ENCODE measurements at regions of chr20 and their contacts with region 1.

Region 1: GRCh38 chr20:59032023-59032712 is at the start of gene ATP5F1E:
- DNase-seq: peak; percentile 89
- ATAC-seq: peak; percentile 99
- H3K4me3 ChIP-seq: peak within 1 kb of the TSS; percentile 93
- H3K27ac ChIP-seq: peak within 1 kb of the TSS; percentile 94
- H3K4me1 ChIP-seq: peaks cover 9% of the 10 kb centered on the region
- H3K27me3 ChIP-seq: no peaks in the 10 kb centered on the region
- CTCF ChIP-seq: no peak
- POLR2A ChIP-seq: peak; percentile 79
- RAD21 ChIP-seq: no peak
- total RNA-seq, gene ATP5F1E: 3.8 and 12.2 TPM in 2 replicates

Region 2: DNA sequence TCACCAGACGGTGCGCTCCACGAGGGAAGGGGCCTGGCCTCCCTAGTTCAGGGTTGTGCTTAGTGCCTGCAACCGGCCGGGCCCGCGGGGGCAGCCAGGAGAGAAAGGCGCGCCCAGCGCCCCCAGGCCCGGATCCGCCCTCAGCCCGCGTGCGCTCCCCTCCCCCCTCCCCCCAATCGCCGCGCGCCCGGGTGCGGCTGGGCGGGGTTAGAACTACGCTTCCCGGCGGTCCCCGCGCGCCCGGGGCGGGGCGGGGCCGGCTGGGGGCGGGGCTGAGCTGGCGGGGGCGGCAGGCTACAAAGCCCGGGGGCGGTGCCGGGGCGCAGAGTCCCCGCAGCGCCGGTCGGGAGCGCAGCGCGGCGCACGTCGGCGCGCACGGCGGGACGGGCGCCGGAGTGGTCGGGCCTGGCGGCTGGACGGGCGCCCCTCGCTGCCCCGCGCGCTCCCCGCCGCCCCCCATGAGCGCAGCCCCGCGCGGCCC is 1641.1 kb before region 1 on chr20 and contains the start of gene RBM38:
- CTCF ChIA-PET with region 1: no interaction called
- POLR2A ChIA-PET with region 1: no interaction called
- dilution Hi-C with region 1: no loop called
- in situ Hi-C with region 1: loop called (anchors 25 kb)
- intact Hi-C with region 1: no loop called
- DNase-seq: peak; percentile 49
- ATAC-seq: peak; percentile 96
- H3K4me3 ChIP-seq: peak within 1 kb of the TSS; percentile 99
- H3K27ac ChIP-seq: peak within 1 kb of the TSS; percentile 30; the same call in 1 of the 2 replicates
- H3K4me1 ChIP-seq: peaks cover 9% of the 10 kb centered on the region
- H3K27me3 ChIP-seq: no peaks in the 10 kb centered on the region
- CTCF ChIP-seq: no peak
- POLR2A ChIP-seq: no peak
- RAD21 ChIP-seq: no peak
- total RNA-seq, gene RBM38: 5.2 and 6.9 TPM in 2 replicates

Region 3: DNA sequence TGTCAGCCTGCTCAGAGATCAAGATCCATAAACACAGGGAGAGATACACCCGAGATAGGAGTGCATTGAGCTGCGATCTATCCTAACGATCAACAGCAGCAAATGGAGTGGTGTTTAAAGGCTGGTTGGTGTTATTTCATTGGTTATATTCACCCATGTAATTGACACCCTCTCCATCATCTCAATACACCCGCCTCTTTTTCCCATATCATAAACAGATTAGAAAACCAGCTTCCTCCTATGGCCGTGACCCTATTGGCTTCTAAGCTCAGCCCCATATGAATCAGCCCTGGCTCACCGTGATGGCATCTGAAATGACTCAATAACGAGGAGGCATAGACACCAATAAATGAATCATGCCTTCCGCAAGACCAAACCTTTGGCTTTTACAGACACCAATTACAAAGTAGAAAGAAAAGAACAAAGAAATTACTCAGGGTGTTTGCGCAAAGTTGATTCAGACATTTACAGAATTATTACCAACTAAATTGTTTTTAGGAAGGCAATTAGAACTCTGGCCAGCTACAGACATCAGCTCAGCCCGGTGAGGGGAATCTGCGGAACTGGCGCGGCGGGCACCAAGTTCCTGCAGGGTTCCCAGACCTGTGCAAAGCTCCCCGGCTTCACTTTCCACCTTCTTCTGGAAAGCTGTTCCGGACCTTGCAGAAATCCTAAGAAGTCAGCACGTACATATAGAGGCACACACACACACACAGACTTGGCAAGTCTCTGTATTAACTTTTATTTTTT is 1333.9 kb before region 1 on chr20:
- CTCF ChIA-PET with region 1: no interaction called
- POLR2A ChIA-PET with region 1: no interaction called
- dilution Hi-C with region 1: no loop called
- in situ Hi-C with region 1: loop called (anchors 25 kb)
- intact Hi-C with region 1: no loop called
- DNase-seq: peak; percentile 98
- ATAC-seq: peak; percentile 95
- H3K4me3 ChIP-seq: peak overlapping the region; percentile 5; the same call in 1 of the 2 replicates
- H3K27ac ChIP-seq: peak overlapping the region; percentile 64
- H3K4me1 ChIP-seq: peaks cover 17% of the 10 kb centered on the region
- H3K27me3 ChIP-seq: no peaks in the 10 kb centered on the region
- CTCF ChIP-seq: no peak
- POLR2A ChIP-seq: peak; percentile 14; the same call in 1 of the 2 replicates
- RAD21 ChIP-seq: no peak

Region 4: GRCh38 chr20:58481481-58482021 is 550.6 kb before region 1 on chr20:
- CTCF ChIA-PET with region 1: no interaction called
- POLR2A ChIA-PET with region 1: no interaction called
- dilution Hi-C with region 1: no loop called
- in situ Hi-C with region 1: no loop called
- intact Hi-C with region 1: no loop called
- DNase-seq: no peak
- ATAC-seq: peak; percentile 56
- H3K4me3 ChIP-seq: no peak overlapping the region
- H3K27ac ChIP-seq: no peak overlapping the region
- H3K4me1 ChIP-seq: no peaks in the 10 kb centered on the region
- H3K27me3 ChIP-seq: no peaks in the 10 kb centered on the region
- CTCF ChIP-seq: peak; percentile 55
- POLR2A ChIP-seq: no peak
- RAD21 ChIP-seq: peak; percentile 79

Region 5: DNA sequence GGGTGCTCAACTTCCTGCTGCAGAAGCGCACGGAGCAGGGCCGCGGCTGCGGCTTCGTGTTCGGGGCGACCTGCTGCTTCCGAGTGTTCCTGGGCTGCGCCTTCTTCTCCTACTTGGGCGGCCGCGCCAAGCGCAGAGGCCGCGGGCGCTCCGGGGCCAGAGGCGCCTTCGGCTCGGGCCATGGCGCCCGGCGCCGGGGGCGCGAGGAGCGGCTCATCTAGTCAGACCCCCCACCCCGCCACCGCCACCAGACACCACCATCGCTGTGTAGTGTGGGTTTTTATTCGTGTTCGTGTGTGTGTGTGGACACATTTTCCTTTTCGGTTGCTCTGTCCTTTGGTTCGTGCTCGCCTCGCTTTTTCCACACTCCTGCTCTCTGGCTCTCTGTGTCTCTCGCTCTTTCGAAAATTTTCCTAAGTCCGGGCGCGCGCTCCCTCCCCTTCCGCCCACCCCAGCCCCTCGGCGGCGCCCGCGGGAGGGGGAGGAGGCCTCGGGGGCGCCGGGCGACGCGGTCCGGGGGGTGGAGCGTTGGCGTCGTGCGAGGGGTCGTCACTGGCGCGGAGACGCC is 141.6 kb before region 1 on chr20:
- CTCF ChIA-PET with region 1: no interaction called
- POLR2A ChIA-PET with region 1: no interaction called
- dilution Hi-C with region 1: no loop called
- in situ Hi-C with region 1: no loop called
- intact Hi-C with region 1: loop called (anchors 5 kb)
- DNase-seq: peak; percentile 77
- ATAC-seq: peak; percentile 64
- H3K4me3 ChIP-seq: peak overlapping the region; percentile 100
- H3K27ac ChIP-seq: peak overlapping the region; percentile 91
- H3K4me1 ChIP-seq: peaks cover 3% of the 10 kb centered on the region
- H3K27me3 ChIP-seq: peaks cover 2% of the 10 kb centered on the region; the same call in 1 of the 2 replicates
- CTCF ChIP-seq: no peak
- POLR2A ChIP-seq: 0 out of 2 replicates have a peak, but pooled peaks have one; percentile 12
- RAD21 ChIP-seq: no peak

Region 6: DNA sequence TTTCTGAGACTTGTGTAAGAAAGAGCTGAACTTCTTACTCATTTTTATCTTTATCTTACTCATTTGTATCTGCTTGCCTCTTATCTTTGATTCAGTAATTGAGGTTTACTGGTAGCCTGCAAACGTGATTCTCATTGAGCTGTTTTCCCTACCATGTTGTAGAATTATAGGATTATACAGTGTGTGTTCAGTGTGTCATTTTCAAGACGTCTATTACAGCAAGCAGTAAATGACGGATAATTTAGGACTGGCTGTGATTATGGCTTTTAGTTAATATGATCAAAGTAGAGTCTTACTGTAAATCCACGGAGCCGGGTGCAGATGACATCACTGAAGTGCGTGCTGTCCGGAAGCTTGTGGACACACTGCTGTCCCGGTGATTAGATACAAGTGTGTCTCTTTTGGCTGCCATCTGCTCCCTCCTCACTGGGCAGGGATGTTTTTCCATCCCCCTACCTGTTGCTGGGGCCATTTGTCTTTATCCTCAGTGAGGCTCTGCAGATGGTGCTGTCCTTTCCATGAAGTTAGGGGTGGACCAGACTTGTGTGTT is 45.1 kb before region 1 on chr20:
- CTCF ChIA-PET with region 1: interaction called, 3 read pairs
- POLR2A ChIA-PET with region 1: interaction called, 3 read pairs
- dilution Hi-C with region 1: no loop called
- in situ Hi-C with region 1: no loop called
- intact Hi-C with region 1: loop called (anchors 5 kb)
- DNase-seq: no peak
- ATAC-seq: no peak
- H3K4me3 ChIP-seq: no peak overlapping the region
- H3K27ac ChIP-seq: no peak overlapping the region
- H3K4me1 ChIP-seq: peaks cover 7% of the 10 kb centered on the region; the same call in 1 of the 2 replicates
- H3K27me3 ChIP-seq: no peaks in the 10 kb centered on the region
- CTCF ChIP-seq: no peak
- POLR2A ChIP-seq: no peak
- RAD21 ChIP-seq: no peak

Region 7: GRCh38 chr20:59082077-59082740 is 50.0 kb after region 1 on chr20:
- CTCF ChIA-PET with region 1: no interaction called
- POLR2A ChIA-PET with region 1: no interaction called
- dilution Hi-C with region 1: no loop called
- in situ Hi-C with region 1: no loop called
- intact Hi-C with region 1: no loop called
- DNase-seq: peak; percentile 84
- ATAC-seq: peak; percentile 75
- H3K4me3 ChIP-seq: no peak overlapping the region
- H3K27ac ChIP-seq: no peak overlapping the region
- H3K4me1 ChIP-seq: peaks cover 2% of the 10 kb centered on the region; the same call in 1 of the 2 replicates
- H3K27me3 ChIP-seq: peaks cover 3% of the 10 kb centered on the region
- CTCF ChIP-seq: no peak; the same call in 1 of the 2 replicates
- POLR2A ChIP-seq: no peak
- RAD21 ChIP-seq: 0 out of 2 replicates have a peak, but pooled peaks have one; percentile 4

Region 8: GRCh38 chr20:59412875-59413284 is 380.7 kb after region 1 on chr20:
- CTCF ChIA-PET with region 1: no interaction called
- POLR2A ChIA-PET with region 1: no interaction called
- dilution Hi-C with region 1: no loop called
- in situ Hi-C with region 1: no loop called
- intact Hi-C with region 1: no loop called
- DNase-seq: no peak
- ATAC-seq: no peak
- H3K4me3 ChIP-seq: no peak overlapping the region
- H3K27ac ChIP-seq: no peak overlapping the region
- H3K4me1 ChIP-seq: no peaks in the 10 kb centered on the region
- H3K27me3 ChIP-seq: no peaks in the 10 kb centered on the region
- CTCF ChIP-seq: no peak
- POLR2A ChIP-seq: no peak
- RAD21 ChIP-seq: no peak